ENCODE measurements at regions of chr10 and their contacts with region 1.

Region 1: GRCh38 chr10:6507311-6507710 is 72.8 kb downstream of the PRKCQ start:
- DNase-seq: peak; percentile 57
- H3K4me3 Mint-ChIP-seq: peak overlapping the region; percentile 60
- H3K27ac Mint-ChIP-seq: peak overlapping the region; percentile 88
- H3K4me1 Mint-ChIP-seq: peaks cover 73% of the 10 kb centered on the region
- H3K27me3 Mint-ChIP-seq: no peaks in the 10 kb centered on the region

Region 2: GRCh38 chr10:6136215-6137201 is 370.8 kb before region 1 on chr10:
- intact Hi-C with region 1: loop called (anchors 10 kb)
- DNase-seq: peak; percentile 43
- H3K4me3 Mint-ChIP-seq: peak overlapping the region; percentile 49
- H3K27ac Mint-ChIP-seq: peak overlapping the region; percentile 91
- H3K4me1 Mint-ChIP-seq: peaks cover 66% of the 10 kb centered on the region
- H3K27me3 Mint-ChIP-seq: peaks cover 9% of the 10 kb centered on the region

Region 3: GRCh38 chr10:6464862-6465430 is 42.4 kb before region 1 on chr10:
- intact Hi-C with region 1: loop called (anchors 1 kb)
- DNase-seq: no peak
- H3K4me3 Mint-ChIP-seq: no peak overlapping the region
- H3K27ac Mint-ChIP-seq: no peak overlapping the region
- H3K4me1 Mint-ChIP-seq: peaks cover 38% of the 10 kb centered on the region
- H3K27me3 Mint-ChIP-seq: no peaks in the 10 kb centered on the region

Region 4: DNA sequence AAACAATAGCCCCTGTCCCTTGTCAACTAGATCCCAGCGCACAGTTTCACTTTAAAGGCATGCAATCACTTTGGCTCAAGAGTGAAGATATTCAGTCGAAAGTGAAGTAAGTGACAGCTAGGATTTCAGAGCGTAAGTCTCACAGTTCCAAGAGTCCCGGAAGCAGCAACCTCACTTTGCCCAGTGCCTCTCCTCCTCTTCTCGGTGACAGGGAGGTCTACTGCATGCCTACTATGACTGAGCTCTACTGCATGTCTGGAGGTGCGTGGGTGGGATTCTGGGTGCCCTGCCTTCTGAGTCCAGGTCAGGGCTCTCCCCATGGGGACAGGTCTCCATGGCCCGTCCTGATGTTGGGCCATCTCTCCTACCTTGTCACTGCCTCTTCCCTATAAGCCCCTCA is 55.8 kb after region 1 on chr10:
- intact Hi-C with region 1: loop called (anchors 1 kb)
- DNase-seq: peak; percentile 43
- H3K4me3 Mint-ChIP-seq: peak overlapping the region; percentile 74
- H3K27ac Mint-ChIP-seq: peak overlapping the region; percentile 81
- H3K4me1 Mint-ChIP-seq: peaks cover 81% of the 10 kb centered on the region
- H3K27me3 Mint-ChIP-seq: no peaks in the 10 kb centered on the region